ENCODE measurements at regions of chr4 and their contacts with region 1.

Region 1: GRCh38 chr4:143286701-143287571 is 49.7 kb upstream of the GAB1 start:
- DNase-seq: peak in 1 of 2 donors; percentile 13
- ATAC-seq: peak in 7 of 8 donors; percentile 26 to 79 (median 52)
- H3K4me3 ChIP-seq: peak overlapping the region in 2 of 10 donors; percentile 1
- H3K27ac ChIP-seq: peak overlapping the region; percentile 35 to 84 (median 70)
- H3K4me1 ChIP-seq: peaks cover 0 to 45% (median 27%) of the 10 kb centered on the region in 9 donors
- H3K27me3 ChIP-seq: no peaks in the 10 kb centered on the region
- CTCF ChIP-seq: no peak

Region 2: GRCh38 chr4:143207557-143207956 is 79.4 kb before region 1 on chr4:
- intact Hi-C with region 1: loop called in 1 of 10 experiments (anchors 10 kb)
- DNase-seq: no peak
- ATAC-seq: peak in 5 of 8 donors; percentile 38 to 63 (median 58)
- H3K4me3 ChIP-seq: no peak overlapping the region
- H3K27ac ChIP-seq: no peak overlapping the region
- H3K4me1 ChIP-seq: peaks cover 0 to 13% (median 7%) of the 10 kb centered on the region in 9 donors
- H3K27me3 ChIP-seq: no peaks in the 10 kb centered on the region
- CTCF ChIP-seq: peak; percentile 9 to 68 (median 53)

Region 3: DNA sequence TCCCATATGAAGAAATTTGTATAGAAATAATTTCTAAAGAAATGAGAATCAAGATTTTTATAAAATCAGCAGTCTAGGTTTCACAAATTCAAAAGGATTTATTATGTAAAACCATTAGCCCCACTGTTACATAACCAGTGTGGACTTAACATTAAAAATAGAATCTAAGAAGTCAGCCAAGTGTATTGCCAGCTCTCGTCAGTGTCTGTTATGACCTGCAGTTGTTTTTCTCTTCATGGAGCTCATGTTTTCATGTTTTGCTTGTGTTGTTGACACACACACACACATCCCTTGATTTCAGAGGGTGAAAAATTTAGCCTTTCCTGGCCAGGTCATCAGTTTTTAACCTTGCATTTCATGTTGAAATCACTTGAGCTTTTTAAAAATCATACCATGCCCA is 62.7 kb before region 1 on chr4:
- intact Hi-C with region 1: loop called in 1 of 10 experiments (anchors 10 kb)
- DNase-seq: peak in 1 of 2 donors; percentile 9
- ATAC-seq: peak in 7 of 8 donors; percentile 48 to 90 (median 82)
- H3K4me3 ChIP-seq: no peak overlapping the region
- H3K27ac ChIP-seq: peak overlapping the region in 5 of 10 donors; percentile 9 to 49 (median 29)
- H3K4me1 ChIP-seq: peaks cover 0 to 41% (median 9%) of the 10 kb centered on the region in 9 donors
- H3K27me3 ChIP-seq: no peaks in the 10 kb centered on the region
- CTCF ChIP-seq: no peak

Region 4: GRCh38 chr4:143240939-143241679 is 45.8 kb before region 1 on chr4:
- intact Hi-C with region 1: no loop called
- DNase-seq: no peak
- ATAC-seq: peak in 1 of 8 donors; percentile 42
- H3K4me3 ChIP-seq: no peak overlapping the region
- H3K27ac ChIP-seq: no peak overlapping the region
- H3K4me1 ChIP-seq: peaks cover 0 to 17% (median 3%) of the 10 kb centered on the region in 9 donors
- H3K27me3 ChIP-seq: no peaks in the 10 kb centered on the region
- CTCF ChIP-seq: no peak

Region 5: DNA sequence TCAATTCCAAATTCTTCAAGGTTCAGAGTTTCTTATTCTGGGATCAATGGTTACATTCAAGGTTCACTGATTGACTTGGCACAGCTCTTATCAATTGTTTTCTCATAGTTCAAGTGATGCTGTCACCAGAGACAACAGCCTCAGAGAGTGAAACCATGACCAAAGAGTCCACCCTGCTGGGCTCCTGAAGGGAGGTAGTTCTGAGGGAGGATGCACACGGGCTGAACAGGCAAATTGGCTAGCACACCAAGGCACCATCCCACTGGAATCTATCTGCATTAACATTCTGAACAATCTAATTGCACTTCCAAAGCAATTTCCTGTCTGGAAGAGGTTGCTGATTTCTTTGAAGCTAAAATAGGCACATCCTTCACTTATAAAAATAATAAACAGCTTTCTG is 33.2 kb after region 1 on chr4:
- intact Hi-C with region 1: loop called in 1 of 10 experiments (anchors 5 kb)
- DNase-seq: no peak
- ATAC-seq: peak in 4 of 8 donors; percentile 45 to 71 (median 58)
- H3K4me3 ChIP-seq: no peak overlapping the region
- H3K27ac ChIP-seq: no peak overlapping the region
- H3K4me1 ChIP-seq: peaks cover 0 to 16% (median 5%) of the 10 kb centered on the region in 9 donors
- H3K27me3 ChIP-seq: no peaks in the 10 kb centered on the region
- CTCF ChIP-seq: no peak

Region 6: DNA sequence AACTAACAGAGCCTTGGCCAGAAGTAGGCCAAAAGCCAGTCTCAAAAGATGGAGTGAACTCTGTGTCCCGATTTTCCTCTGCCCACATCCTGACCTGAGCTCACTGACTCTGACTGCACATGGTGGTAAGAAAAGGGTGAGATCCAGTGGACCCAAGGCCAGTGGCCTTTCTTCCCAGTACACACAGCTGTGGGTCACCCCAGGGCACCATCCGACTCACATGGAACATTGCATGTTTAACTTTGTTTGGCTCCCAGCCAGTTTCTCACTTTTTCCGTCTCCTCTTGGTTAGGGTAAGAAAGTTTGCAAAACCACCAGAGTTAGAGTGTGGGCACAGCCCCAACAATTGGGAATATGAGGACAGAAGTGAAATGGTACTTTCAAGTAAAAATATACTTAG is 119.6 kb after region 1 on chr4:
- intact Hi-C with region 1: loop called in 1 of 10 experiments (anchors 10 kb)
- DNase-seq: peak; percentile 42 to 77
- ATAC-seq: peak; percentile 41 to 86 (median 54)
- H3K4me3 ChIP-seq: no peak overlapping the region
- H3K27ac ChIP-seq: peak overlapping the region in 9 of 10 donors; percentile 24 to 78 (median 53)
- H3K4me1 ChIP-seq: peaks cover 33 to 100% (median 94%) of the 10 kb centered on the region in 9 donors
- H3K27me3 ChIP-seq: no peaks in the 10 kb centered on the region
- CTCF ChIP-seq: no peak

Measured in heart right ventricle (tissue), 16 donors.